Posterior cingulate gyrus (tissue), 11 donors: ENCODE measurements at regions of chr13 and their contacts with region 1.

Region 1: DNA sequence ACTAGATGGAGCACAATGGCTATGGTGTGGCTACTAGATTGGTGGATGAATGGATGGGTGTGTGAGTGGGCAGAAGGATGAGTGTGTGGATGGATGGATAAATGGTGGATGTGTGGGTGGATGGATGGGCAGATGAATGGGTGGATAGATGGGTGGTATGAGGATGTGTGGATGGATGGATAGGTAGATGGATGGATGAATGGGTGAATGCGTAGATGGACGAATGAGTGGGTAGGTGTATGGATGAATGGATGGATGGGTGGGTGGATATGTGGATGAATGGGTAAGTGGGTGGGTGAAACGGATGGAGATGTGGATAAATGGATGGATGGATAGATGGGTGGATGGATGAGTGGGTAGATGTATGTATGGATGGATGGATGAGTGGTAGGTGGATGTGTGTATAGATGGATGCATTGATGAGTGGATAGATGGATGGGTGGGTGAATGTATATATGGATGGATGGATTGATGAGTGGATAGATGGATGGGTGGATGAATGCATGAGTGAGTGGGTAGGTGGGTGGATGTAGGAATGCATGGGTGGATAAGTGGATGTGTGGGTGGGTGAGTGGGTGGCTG is 114.2 kb downstream of the TEX29 start:
- DNase-seq: no peak

Region 2: GRCh38 chr13:111347438-111347837 is 87.2 kb before region 1 on chr13:
- intact Hi-C with region 1: no loop called
- DNase-seq: peak in 1 of 10 donors; percentile 49

Region 3: GRCh38 chr13:111361873-111362648 is 72.6 kb before region 1 on chr13:
- intact Hi-C with region 1: no loop called
- DNase-seq: peak in 1 of 10 donors; percentile 54

Region 4: GRCh38 chr13:111491659-111492058 is 57.0 kb after region 1 on chr13:
- intact Hi-C with region 1: loop called (anchors 2 kb)
- DNase-seq: peak in 2 of 10 donors; percentile 15 to 21